Heart right ventricle (tissue), 16 donors: ENCODE measurements at regions of chr3 and their contacts with region 1.

Region 1: DNA sequence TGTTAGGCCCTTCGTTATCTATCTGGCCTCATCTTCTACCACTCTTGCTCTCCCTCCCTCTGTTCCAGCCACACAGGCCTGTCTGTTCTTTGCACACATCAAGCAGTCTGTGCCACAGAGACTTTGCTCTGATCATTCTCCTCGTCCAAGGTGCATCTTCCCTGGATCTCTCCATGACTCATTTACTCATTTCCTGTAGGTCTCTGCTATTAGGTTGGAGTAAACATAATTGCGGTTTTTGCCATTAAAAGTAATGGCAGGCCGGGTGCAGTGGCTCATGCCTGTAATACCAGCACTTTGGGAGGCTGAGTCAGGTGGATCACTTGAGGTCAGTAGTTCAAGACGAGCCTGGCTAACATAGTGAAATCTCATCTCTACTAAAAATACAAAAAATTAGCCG is 9.5 kb upstream of the C3orf49 start:
- DNase-seq: no peak
- ATAC-seq: no peak
- H3K4me3 ChIP-seq: no peak overlapping the region
- H3K27ac ChIP-seq: no peak overlapping the region
- H3K4me1 ChIP-seq: peaks cover 0 to 13% (median 0%) of the 10 kb centered on the region in 9 donors
- H3K27me3 ChIP-seq: no peaks in the 10 kb centered on the region
- CTCF ChIP-seq: no peak

Region 2: GRCh38 chr3:63355809-63356208 is 453.8 kb before region 1 on chr3:
- intact Hi-C with region 1: loop called in 1 of 10 experiments (anchors 5 kb)
- DNase-seq: no peak
- ATAC-seq: no peak
- H3K4me3 ChIP-seq: no peak overlapping the region
- H3K27ac ChIP-seq: no peak overlapping the region
- H3K4me1 ChIP-seq: peaks cover 0 to 3% (median 0%) of the 10 kb centered on the region in 9 donors
- H3K27me3 ChIP-seq: peaks cover 0 to 43% (median 12%) of the 10 kb centered on the region in 7 donors
- CTCF ChIP-seq: no peak